ENCODE measurements at regions of chr5 and their contacts with region 1.

Region 1: GRCh38 chr5:169670769-169671525 is 33.9 kb downstream of the DOCK2 start:
- DNase-seq: peak; percentile 80
- ATAC-seq: peak; percentile 98
- H3K4me3 ChIP-seq: peak overlapping the region; percentile 42; the same call in 1 of the 2 replicates
- H3K27ac ChIP-seq: peak overlapping the region; percentile 95
- H3K4me1 ChIP-seq: peaks cover 33% of the 10 kb centered on the region
- H3K27me3 ChIP-seq: no peaks in the 10 kb centered on the region
- CTCF ChIP-seq: no peak
- EP300 ChIP-seq: peak; percentile 67 to 69; a peak in 3 of 4 replicates
- POLR2A ChIP-seq: no peak
- RAD21 ChIP-seq: peak; percentile 20; the same call in 1 of the 2 replicates

Region 2: DNA sequence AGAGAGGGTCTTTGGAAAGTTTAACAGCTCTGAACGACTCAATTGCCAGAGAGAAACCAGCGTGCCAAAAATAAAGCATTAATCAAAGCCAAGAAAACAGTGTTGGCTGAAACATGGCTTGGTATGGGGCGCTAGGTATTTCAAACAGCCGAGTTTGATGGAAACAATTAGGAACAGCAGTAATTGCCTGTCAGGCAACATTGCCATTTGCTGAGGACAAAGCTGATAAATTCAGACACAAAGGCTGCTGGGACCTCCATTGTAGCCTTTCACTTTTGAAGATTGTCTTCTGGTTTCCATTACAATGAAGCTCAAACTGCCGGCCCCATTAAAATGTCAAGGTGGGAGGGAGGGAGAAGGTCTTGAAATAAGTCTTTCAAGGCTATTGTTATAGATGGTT is 212.7 kb before region 1 on chr5:
- CTCF ChIA-PET with region 1: no interaction called
- POLR2A ChIA-PET with region 1: no interaction called
- RAD21 ChIA-PET with region 1: no interaction called
- SMC1A ChIA-PET with region 1: no interaction called
- in situ Hi-C with region 1: no loop called
- intact Hi-C with region 1: no loop called
- DNase-seq: no peak
- ATAC-seq: no peak
- H3K4me3 ChIP-seq: no peak overlapping the region
- H3K27ac ChIP-seq: no peak overlapping the region
- H3K4me1 ChIP-seq: no peaks in the 10 kb centered on the region
- H3K27me3 ChIP-seq: no peaks in the 10 kb centered on the region; a peak in 2 of 4 replicates
- CTCF ChIP-seq: no peak
- EP300 ChIP-seq: no peak
- POLR2A ChIP-seq: no peak
- RAD21 ChIP-seq: no peak

Region 3: GRCh38 chr5:169591636-169592035 is 79.3 kb before region 1 on chr5:
- CTCF ChIA-PET with region 1: interaction called, 5 read pairs
- POLR2A ChIA-PET with region 1: no interaction called
- RAD21 ChIA-PET with region 1: interaction called, 6 read pairs
- SMC1A ChIA-PET with region 1: interaction called, 17 read pairs
- in situ Hi-C with region 1: no loop called
- intact Hi-C with region 1: no loop called
- DNase-seq: no peak
- ATAC-seq: no peak
- H3K4me3 ChIP-seq: no peak overlapping the region
- H3K27ac ChIP-seq: no peak overlapping the region
- H3K4me1 ChIP-seq: no peaks in the 10 kb centered on the region
- H3K27me3 ChIP-seq: no peaks in the 10 kb centered on the region
- CTCF ChIP-seq: no peak
- EP300 ChIP-seq: no peak
- POLR2A ChIP-seq: no peak
- RAD21 ChIP-seq: no peak

Region 4: GRCh38 chr5:169609716-169610115 is 61.2 kb before region 1 on chr5:
- CTCF ChIA-PET with region 1: interaction called, 4 read pairs
- POLR2A ChIA-PET with region 1: interaction called, 7 read pairs
- RAD21 ChIA-PET with region 1: interaction called, 13 read pairs
- SMC1A ChIA-PET with region 1: interaction called, 18 read pairs
- in situ Hi-C with region 1: no loop called
- intact Hi-C with region 1: loop called (anchors 5 kb)
- DNase-seq: no peak
- ATAC-seq: no peak
- H3K4me3 ChIP-seq: no peak overlapping the region
- H3K27ac ChIP-seq: no peak overlapping the region
- H3K4me1 ChIP-seq: peaks cover 6% of the 10 kb centered on the region
- H3K27me3 ChIP-seq: no peaks in the 10 kb centered on the region
- CTCF ChIP-seq: no peak
- EP300 ChIP-seq: no peak
- POLR2A ChIP-seq: no peak
- RAD21 ChIP-seq: no peak

Region 5: DNA sequence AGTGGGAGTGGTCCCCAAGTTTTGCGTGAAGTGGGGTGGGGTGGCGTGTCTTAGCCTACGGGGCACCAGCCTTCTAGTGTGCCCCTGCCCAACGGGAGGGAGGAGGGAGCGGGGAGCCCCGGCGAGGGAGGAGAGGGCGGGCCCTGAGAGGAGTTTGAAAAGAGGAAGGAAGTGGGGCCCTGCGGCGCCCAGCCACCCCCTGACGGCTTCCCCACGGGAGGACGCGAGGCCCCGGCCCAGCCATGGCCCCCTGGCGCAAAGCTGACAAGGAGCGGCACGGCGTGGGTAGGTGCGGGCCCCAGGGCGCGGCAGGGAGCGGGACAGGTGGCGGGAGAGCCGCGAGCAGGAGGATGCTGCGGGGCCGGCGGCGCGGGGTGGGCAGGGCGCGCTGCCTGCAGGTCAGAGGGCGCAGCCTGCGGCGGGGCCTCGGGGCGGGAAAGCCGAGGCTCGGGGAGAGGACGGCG is 33.8 kb before region 1 on chr5 and contains the start of gene DOCK2:
- CTCF ChIA-PET with region 1: interaction called, 12 read pairs
- POLR2A ChIA-PET with region 1: interaction called, 24 read pairs
- RAD21 ChIA-PET with region 1: interaction called, 27 read pairs
- SMC1A ChIA-PET with region 1: interaction called, 36 read pairs
- in situ Hi-C with region 1: no loop called
- intact Hi-C with region 1: loop called (anchors 1 kb)
- DNase-seq: no peak
- ATAC-seq: peak; percentile 95
- H3K4me3 ChIP-seq: peak within 1 kb of the TSS; percentile 89
- H3K27ac ChIP-seq: peak within 1 kb of the TSS; percentile 98
- H3K4me1 ChIP-seq: peaks cover 12% of the 10 kb centered on the region; the same call in 1 of the 2 replicates
- H3K27me3 ChIP-seq: no peaks in the 10 kb centered on the region
- CTCF ChIP-seq: no peak
- EP300 ChIP-seq: peak in 1 of 2 experiments; percentile 31; a peak in 1 of 4 replicates
- POLR2A ChIP-seq: peak; percentile 93
- RAD21 ChIP-seq: no peak
- polyA plus RNA-seq, gene DOCK2: 34.2 to 41.6 TPM

Region 6: GRCh38 chr5:169650701-169651331 is 20.1 kb before region 1 on chr5:
- CTCF ChIA-PET with region 1: interaction called, 14 read pairs
- POLR2A ChIA-PET with region 1: interaction called, 14 read pairs
- RAD21 ChIA-PET with region 1: interaction called, 43 read pairs
- SMC1A ChIA-PET with region 1: interaction called, 74 read pairs
- in situ Hi-C with region 1: no loop called
- intact Hi-C with region 1: no loop called
- DNase-seq: peak; percentile 76
- ATAC-seq: peak; percentile 70
- H3K4me3 ChIP-seq: peak overlapping the region; percentile 50; the same call in 1 of the 2 replicates
- H3K27ac ChIP-seq: peak overlapping the region; percentile 98
- H3K4me1 ChIP-seq: peaks cover 92% of the 10 kb centered on the region
- H3K27me3 ChIP-seq: no peaks in the 10 kb centered on the region
- CTCF ChIP-seq: no peak
- EP300 ChIP-seq: peak; percentile 7 to 68; a peak in 1 of 4 replicates
- POLR2A ChIP-seq: no peak
- RAD21 ChIP-seq: 0 out of 2 replicates have a peak, but pooled peaks have one; percentile 3

Region 7: DNA sequence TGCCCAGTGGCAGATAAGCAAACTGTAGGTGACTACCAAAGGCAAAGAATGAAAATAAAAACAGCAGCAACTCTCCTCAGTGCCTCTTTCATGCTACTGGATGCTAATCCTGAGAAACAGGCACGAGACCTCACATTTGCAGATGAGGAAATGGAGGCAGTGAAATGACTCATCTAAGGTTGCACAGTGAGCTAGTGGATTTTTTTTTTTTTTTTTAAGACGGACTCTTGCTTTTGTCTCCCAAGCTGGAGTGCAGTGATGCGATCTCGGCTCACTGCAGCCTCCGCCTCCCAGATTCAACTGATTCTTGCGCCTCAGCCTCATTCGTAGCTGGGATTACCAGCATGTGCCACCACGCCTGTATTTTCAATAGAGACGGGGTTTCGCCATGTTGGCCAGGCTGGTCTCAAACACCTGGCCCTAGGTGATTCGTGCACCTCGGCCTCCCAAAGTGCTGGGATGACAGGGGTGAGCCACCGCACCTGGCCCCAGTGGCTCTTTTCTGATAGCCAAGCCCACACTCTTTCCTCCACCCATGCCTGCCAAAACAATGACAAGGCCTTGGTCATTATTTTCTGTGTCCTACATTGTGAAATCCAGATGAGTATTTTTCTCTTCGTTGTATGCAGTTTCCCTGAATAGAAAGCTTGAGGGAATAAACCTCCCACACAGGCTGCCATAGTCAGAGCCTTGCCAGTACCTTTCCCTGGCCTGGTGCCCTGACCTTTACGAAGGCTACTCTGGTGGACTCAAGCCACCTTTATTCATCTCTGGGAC is 14.6 kb before region 1 on chr5:
- CTCF ChIA-PET with region 1: interaction called, 14 read pairs
- POLR2A ChIA-PET with region 1: interaction called, 14 read pairs
- RAD21 ChIA-PET with region 1: interaction called, 43 read pairs
- SMC1A ChIA-PET with region 1: interaction called, 74 read pairs
- in situ Hi-C with region 1: no loop called
- intact Hi-C with region 1: loop called (anchors 1 kb)
- DNase-seq: peak; percentile 79
- ATAC-seq: peak; percentile 75
- H3K4me3 ChIP-seq: peak overlapping the region; percentile 40; the same call in 1 of the 2 replicates
- H3K27ac ChIP-seq: peak overlapping the region; percentile 88
- H3K4me1 ChIP-seq: peaks cover 60% of the 10 kb centered on the region
- H3K27me3 ChIP-seq: no peaks in the 10 kb centered on the region
- CTCF ChIP-seq: no peak
- EP300 ChIP-seq: peak; percentile 56 to 70; a peak in 3 of 4 replicates
- POLR2A ChIP-seq: no peak
- RAD21 ChIP-seq: peak; percentile 21; the same call in 1 of the 2 replicates

Region 8: DNA sequence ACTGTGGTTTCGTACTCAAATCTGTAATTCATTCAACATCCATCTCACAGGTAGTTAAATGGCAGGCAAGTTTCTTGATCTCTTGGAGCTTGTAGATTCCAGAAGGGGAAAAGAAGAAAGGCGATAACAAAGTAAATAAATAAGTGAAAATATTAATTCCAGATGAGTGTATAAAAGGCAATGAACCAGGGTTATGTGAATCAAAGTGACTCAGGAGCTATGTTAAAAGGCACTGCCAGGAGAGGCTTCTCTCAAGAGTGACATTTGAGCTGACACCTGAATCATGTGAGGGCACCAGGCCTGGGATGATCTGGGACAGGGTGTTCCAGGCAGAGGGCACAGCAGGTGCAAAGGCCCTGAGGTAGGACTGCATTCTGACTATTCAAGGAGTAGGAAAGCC is 11.1 kb after region 1 on chr5:
- CTCF ChIA-PET with region 1: interaction called, 5 read pairs
- POLR2A ChIA-PET with region 1: no interaction called
- RAD21 ChIA-PET with region 1: interaction called, 5 read pairs
- SMC1A ChIA-PET with region 1: interaction called, 28 read pairs
- in situ Hi-C with region 1: no loop called
- intact Hi-C with region 1: no loop called
- DNase-seq: no peak
- ATAC-seq: no peak
- H3K4me3 ChIP-seq: no peak overlapping the region
- H3K27ac ChIP-seq: no peak overlapping the region
- H3K4me1 ChIP-seq: peaks cover 2% of the 10 kb centered on the region; the same call in 1 of the 2 replicates
- H3K27me3 ChIP-seq: no peaks in the 10 kb centered on the region
- CTCF ChIP-seq: no peak
- EP300 ChIP-seq: no peak
- POLR2A ChIP-seq: no peak
- RAD21 ChIP-seq: no peak

Region 9: GRCh38 chr5:169847519-169847918 is 176.6 kb after region 1 on chr5:
- CTCF ChIA-PET with region 1: no interaction called
- POLR2A ChIA-PET with region 1: no interaction called
- RAD21 ChIA-PET with region 1: no interaction called
- SMC1A ChIA-PET with region 1: no interaction called
- in situ Hi-C with region 1: no loop called
- intact Hi-C with region 1: no loop called
- DNase-seq: no peak
- ATAC-seq: no peak
- H3K4me3 ChIP-seq: no peak overlapping the region
- H3K27ac ChIP-seq: no peak overlapping the region
- H3K4me1 ChIP-seq: no peaks in the 10 kb centered on the region
- H3K27me3 ChIP-seq: no peaks in the 10 kb centered on the region
- CTCF ChIP-seq: no peak
- EP300 ChIP-seq: no peak
- POLR2A ChIP-seq: no peak
- RAD21 ChIP-seq: no peak

Measured in GM12878 (cell line).